IMR-90 (cell line): ENCODE measurements at regions of chr11 and their contacts with region 1.

Region 1: DNA sequence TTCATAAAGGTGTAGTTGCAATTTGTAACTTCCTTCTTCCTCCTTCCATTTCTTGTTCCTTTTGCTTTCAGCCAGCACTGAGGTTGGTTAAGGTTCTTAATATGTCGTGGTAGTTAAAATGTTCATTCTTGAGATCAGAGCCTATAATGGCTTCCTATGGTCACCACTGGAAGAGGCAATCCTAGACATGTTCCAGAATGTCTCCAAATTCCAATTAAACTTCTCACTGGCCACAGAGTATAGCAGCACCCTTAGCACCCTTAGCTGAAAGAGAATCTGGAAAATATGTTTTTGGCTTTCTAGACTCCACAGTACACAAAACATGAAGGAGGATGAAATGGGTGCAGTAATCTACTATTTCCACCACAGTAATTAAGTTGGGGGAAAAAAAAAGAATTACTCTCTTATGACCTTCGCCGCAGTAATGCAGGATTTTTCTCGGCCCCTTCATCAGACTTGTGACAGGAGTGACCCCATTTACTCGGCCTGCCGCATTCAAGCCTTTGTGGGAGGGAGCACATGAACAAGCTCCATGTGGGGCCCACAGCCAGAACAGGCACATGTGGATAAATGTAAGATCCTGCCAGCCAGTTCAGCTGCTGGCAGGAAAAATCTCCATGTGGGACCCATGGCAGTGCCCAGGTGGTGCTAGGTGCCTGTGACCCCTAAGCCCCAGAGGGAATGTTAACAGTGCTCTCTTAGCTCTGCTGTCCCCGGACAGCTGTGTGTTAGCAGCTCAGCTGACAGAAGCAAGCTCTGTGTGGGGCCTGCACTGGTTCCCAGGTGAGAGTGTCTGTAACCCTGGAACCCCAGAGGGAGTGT is 348.7 kb upstream of the ARHGAP42 start:
- DNase-seq: no peak
- ATAC-seq: no peak
- H3K4me3 ChIP-seq: no peak overlapping the region
- H3K27ac ChIP-seq: no peak overlapping the region
- H3K4me1 ChIP-seq: no peaks in the 10 kb centered on the region
- H3K27me3 ChIP-seq: peaks cover 2% of the 10 kb centered on the region
- CTCF ChIP-seq: no peak
- POLR2A ChIP-seq: no peak
- RAD21 ChIP-seq: no peak

Region 2: DNA sequence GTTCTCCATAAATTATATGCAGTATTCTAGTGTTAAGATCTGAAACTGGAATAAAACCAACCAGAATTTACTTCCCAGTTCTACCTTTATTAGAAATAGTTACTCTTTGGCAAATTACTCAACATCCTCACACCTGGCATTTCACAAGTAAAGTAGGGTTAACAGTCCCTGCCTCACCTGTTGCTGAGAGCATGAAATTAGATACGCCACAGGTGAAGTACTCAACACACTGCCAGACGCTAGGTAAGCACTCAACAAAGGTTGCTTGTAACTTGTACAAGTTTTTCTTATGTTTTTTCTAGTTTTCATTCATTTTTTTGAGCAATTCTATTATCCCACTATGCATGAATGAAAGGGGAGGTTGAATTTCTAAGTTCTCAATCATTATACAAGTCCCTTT is 81.2 kb after region 1 on chr11:
- CTCF ChIA-PET with region 1: no interaction called
- POLR2A ChIA-PET with region 1: no interaction called
- dilution Hi-C with region 1: no loop called
- in situ Hi-C with region 1: no loop called
- intact Hi-C with region 1: no loop called
- DNase-seq: no peak
- ATAC-seq: no peak
- H3K4me3 ChIP-seq: no peak overlapping the region
- H3K27ac ChIP-seq: no peak overlapping the region
- H3K4me1 ChIP-seq: no peaks in the 10 kb centered on the region
- H3K27me3 ChIP-seq: no peaks in the 10 kb centered on the region
- CTCF ChIP-seq: no peak
- POLR2A ChIP-seq: no peak
- RAD21 ChIP-seq: no peak

Region 3: DNA sequence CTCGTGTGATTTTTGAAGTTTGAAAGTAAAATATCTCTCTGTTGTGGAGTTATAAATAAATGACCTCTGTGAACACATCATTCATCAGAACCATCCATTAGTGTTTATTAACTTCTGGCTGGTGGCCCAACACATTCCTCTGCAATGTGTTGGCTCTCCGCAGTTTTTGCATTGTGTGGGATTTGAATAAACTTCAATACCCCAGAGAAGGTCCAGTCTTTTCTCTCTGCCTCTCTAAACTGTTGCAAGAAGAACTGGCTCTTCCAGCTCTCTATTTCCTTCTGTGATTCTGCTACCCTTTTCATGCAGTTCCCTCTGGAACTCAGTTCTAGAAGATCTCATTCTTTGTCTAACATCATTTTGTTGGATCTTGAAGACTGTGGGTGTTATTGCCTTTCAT is 223.8 kb after region 1 on chr11:
- CTCF ChIA-PET with region 1: no interaction called
- POLR2A ChIA-PET with region 1: no interaction called
- dilution Hi-C with region 1: no loop called
- in situ Hi-C with region 1: no loop called
- intact Hi-C with region 1: loop called (anchors 10 kb)
- DNase-seq: peak; percentile 86
- ATAC-seq: peak; percentile 92
- H3K4me3 ChIP-seq: no peak overlapping the region
- H3K27ac ChIP-seq: no peak overlapping the region
- H3K4me1 ChIP-seq: peaks cover 3% of the 10 kb centered on the region
- H3K27me3 ChIP-seq: no peaks in the 10 kb centered on the region
- CTCF ChIP-seq: no peak
- POLR2A ChIP-seq: no peak
- RAD21 ChIP-seq: no peak

Region 4: GRCh38 chr11:100719809-100720221 is 381.5 kb after region 1 on chr11:
- CTCF ChIA-PET with region 1: no interaction called
- POLR2A ChIA-PET with region 1: no interaction called
- dilution Hi-C with region 1: no loop called
- in situ Hi-C with region 1: no loop called
- intact Hi-C with region 1: no loop called
- DNase-seq: peak; percentile 79
- ATAC-seq: peak; percentile 85
- H3K4me3 ChIP-seq: no peak overlapping the region
- H3K27ac ChIP-seq: no peak overlapping the region
- H3K4me1 ChIP-seq: peaks cover 4% of the 10 kb centered on the region; the same call in 1 of the 2 replicates
- H3K27me3 ChIP-seq: no peaks in the 10 kb centered on the region
- CTCF ChIP-seq: no peak
- POLR2A ChIP-seq: no peak
- RAD21 ChIP-seq: no peak